ENCODE measurements at regions of chr3 and their contacts with region 1.

Region 1: DNA sequence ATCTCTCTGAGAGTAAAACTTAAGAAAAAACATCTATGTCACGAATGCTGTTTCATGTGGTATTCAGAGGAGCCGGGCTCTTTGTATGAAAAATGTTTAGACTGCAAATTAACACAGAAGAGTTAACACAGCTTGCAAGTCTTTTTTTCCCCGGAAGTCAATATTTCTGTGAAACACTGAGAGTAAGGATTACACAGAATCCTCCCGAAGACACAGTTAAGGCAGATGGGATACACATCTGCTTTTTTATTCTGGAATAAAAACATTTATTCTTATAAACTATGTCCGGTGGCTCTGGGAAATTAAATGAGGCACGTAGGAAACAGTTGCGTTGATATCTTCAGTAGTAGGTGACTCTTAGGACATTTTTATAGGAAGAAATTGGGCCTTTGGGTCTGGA is 180.6 kb downstream of the PTPRG start:
- DNase-seq: no peak
- ATAC-seq: no peak

Region 2: DNA sequence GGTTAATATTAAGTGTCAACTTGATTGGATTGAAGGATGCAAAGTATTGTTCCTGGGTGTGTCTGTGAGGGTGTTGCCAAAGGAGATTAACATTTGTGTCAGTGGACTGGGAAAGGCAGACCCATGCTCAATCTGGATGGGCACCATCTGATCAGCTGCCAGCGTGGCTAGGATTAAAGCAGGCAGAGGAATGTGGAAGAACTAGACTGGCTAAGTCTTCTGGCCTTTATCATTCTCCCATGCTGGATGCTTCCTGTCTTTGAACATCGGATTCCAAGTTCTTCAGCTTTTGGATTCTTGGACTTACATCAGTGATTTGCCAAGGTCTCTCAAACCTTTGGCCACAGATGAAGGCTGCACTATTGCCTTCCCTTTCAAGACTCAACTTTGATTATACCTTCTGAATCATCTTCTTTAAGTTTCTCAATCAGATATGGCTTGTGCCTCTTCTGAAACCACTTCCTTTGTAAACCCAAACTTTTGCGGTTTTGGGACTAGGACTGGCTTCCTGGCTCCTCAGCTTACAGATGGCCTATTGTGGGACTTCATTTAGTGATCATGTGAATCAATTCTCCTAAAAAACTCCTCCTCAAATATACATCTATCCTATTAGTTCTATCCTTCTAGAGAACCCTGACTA is 1180.2 kb after region 1 on chr3:
- intact Hi-C with region 1: loop called (anchors 5 kb)
- DNase-seq: no peak
- ATAC-seq: no peak

Measured in sciatic nerve (tissue), 2 donors.